ENCODE measurements at regions of chr3 and their contacts with region 1.

Region 1: DNA sequence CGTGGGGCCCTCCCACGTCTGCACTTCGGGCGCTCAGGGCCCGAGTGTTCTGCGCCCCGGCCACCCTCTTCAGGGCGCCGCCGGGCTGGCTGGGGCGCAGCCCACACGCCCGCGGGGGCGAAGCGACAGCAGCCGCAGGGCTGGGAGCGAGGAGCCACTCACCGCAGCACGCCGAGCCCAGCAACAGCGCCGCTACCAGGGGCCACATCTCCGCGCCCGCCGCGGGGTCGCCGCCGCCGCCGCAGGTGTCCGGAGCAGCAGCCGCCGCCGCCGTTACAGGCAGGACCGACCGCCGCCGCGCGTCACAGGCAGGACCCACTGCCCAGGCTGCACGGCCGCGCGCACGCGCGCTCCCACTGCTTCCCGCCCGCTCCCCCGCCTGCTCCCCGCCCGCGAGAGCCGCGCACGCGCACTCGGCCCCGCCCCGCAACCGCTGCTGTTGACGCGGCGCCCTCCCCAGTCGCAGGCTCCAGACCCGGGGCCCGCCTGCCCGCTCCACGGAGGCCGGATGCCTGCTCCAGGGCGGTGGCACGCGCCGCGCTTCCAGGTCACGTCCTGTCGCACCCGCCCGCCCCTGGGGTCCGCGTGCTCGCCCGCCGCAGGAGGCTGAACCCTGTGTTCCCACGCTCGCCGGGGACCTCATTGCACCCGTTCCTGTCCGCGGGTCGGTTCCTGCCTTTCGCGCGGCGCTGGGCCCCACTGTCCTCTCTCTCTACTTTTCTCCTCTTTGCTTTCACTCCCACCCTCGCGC is at the start of gene CD47:
- DNase-seq: no peak
- H3K4me3 ChIP-seq: peak within 1 kb of the TSS; percentile 78
- CTCF ChIP-seq: no peak

Region 2: GRCh38 chr3:107825601-107826000 is 265.3 kb before region 1 on chr3:
- CTCF ChIA-PET with region 1: no interaction called
- POLR2A ChIA-PET with region 1: no interaction called
- DNase-seq: no peak
- H3K4me3 ChIP-seq: no peak overlapping the region
- CTCF ChIP-seq: no peak

Region 3: GRCh38 chr3:108073764-108074431 is 17.0 kb before region 1 on chr3:
- CTCF ChIA-PET with region 1: interaction called, 11 read pairs
- POLR2A ChIA-PET with region 1: no interaction called
- DNase-seq: no peak
- H3K4me3 ChIP-seq: no peak overlapping the region
- CTCF ChIP-seq: no peak

Region 4: GRCh38 chr3:108103886-108104797 is 13.3 kb after region 1 on chr3:
- CTCF ChIA-PET with region 1: interaction called, 15 read pairs
- POLR2A ChIA-PET with region 1: no interaction called
- DNase-seq: no peak
- H3K4me3 ChIP-seq: no peak overlapping the region
- CTCF ChIP-seq: no peak

Region 5: DNA sequence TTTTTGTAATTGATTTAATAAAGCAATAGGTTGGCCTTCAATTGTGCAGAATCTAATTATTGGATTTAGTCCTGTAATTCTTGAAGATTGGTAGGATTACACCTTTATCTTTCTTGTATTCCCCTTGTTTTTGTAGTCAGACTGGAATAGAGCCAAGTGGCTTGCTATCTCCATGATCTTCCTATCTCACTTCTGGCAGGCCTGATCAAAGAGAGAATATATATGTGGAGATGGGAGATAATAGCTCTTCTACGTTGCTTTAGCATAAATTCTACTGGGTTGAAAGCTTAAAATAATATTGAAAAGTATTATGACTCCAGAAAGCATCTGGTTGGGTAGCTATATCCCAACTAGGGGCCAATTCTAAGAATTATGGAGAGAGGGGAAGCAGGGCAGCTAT is 148.2 kb after region 1 on chr3:
- CTCF ChIA-PET with region 1: no interaction called
- POLR2A ChIA-PET with region 1: no interaction called
- DNase-seq: no peak
- H3K4me3 ChIP-seq: no peak overlapping the region
- CTCF ChIP-seq: no peak